ENCODE measurements at regions of chr9 and their contacts with region 1.

Region 1: GRCh38 chr9:120842690-120843499 is at the start of gene PSMD5:
- DNase-seq: peak; percentile 99
- H3K4me3 Mint-ChIP-seq: peak within 1 kb of the TSS; percentile 86
- H3K27ac Mint-ChIP-seq: peak within 1 kb of the TSS; percentile 95
- H3K4me1 Mint-ChIP-seq: peaks cover 75% of the 10 kb centered on the region
- H3K27me3 Mint-ChIP-seq: no peaks in the 10 kb centered on the region
- total RNA-seq, gene PSMD5: 51.8 to 64.0 TPM

Region 2: GRCh38 chr9:120755827-120756434 is 87.0 kb before region 1 on chr9:
- CTCF ChIA-PET with region 1: interaction called, 10 read pairs
- POLR2A ChIA-PET with region 1: interaction called, 6 read pairs
- DNase-seq: peak; percentile 66
- H3K4me3 Mint-ChIP-seq: no peak overlapping the region
- H3K27ac Mint-ChIP-seq: no peak overlapping the region
- H3K4me1 Mint-ChIP-seq: peaks cover 10% of the 10 kb centered on the region
- H3K27me3 Mint-ChIP-seq: no peaks in the 10 kb centered on the region

Region 3: GRCh38 chr9:120820095-120820494 is 22.8 kb before region 1 on chr9:
- CTCF ChIA-PET with region 1: no interaction called
- POLR2A ChIA-PET with region 1: no interaction called
- DNase-seq: no peak
- H3K4me3 Mint-ChIP-seq: no peak overlapping the region
- H3K27ac Mint-ChIP-seq: no peak overlapping the region
- H3K4me1 Mint-ChIP-seq: peaks cover 2% of the 10 kb centered on the region
- H3K27me3 Mint-ChIP-seq: no peaks in the 10 kb centered on the region

Region 4: DNA sequence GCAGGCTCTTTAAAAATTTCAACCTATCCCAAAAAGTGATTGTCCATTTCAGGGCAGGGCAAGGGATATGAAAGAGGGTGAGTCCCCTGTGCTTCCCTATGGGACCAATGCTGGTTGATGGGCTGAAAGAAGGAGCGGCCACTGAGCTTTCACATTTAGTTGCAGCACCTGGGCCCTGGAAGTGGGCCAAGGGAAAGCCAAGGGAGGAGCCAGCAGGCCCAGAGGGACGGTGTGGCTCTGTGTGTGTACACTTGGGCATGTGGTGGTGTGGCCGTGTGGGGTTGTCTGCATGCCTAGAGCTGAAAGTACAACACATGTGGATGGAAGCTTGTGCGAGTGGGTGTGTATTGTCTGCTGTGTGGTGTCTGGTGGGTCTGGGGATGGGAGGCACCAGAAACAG is 13.8 kb after region 1 on chr9:
- CTCF ChIA-PET with region 1: interaction called, 3 read pairs
- POLR2A ChIA-PET with region 1: interaction called, 59 read pairs
- DNase-seq: no peak
- H3K4me3 Mint-ChIP-seq: no peak overlapping the region
- H3K27ac Mint-ChIP-seq: no peak overlapping the region
- H3K4me1 Mint-ChIP-seq: peaks cover 6% of the 10 kb centered on the region
- H3K27me3 Mint-ChIP-seq: no peaks in the 10 kb centered on the region

Region 5: GRCh38 chr9:120875954-120876841 is 33.3 kb after region 1 on chr9:
- CTCF ChIA-PET with region 1: interaction called, 12 read pairs
- POLR2A ChIA-PET with region 1: interaction called, 98 read pairs
- DNase-seq: peak; percentile 94
- H3K4me3 Mint-ChIP-seq: peak overlapping the region; percentile 94
- H3K27ac Mint-ChIP-seq: peak overlapping the region; percentile 98
- H3K4me1 Mint-ChIP-seq: peaks cover 76% of the 10 kb centered on the region
- H3K27me3 Mint-ChIP-seq: no peaks in the 10 kb centered on the region

Region 6: DNA sequence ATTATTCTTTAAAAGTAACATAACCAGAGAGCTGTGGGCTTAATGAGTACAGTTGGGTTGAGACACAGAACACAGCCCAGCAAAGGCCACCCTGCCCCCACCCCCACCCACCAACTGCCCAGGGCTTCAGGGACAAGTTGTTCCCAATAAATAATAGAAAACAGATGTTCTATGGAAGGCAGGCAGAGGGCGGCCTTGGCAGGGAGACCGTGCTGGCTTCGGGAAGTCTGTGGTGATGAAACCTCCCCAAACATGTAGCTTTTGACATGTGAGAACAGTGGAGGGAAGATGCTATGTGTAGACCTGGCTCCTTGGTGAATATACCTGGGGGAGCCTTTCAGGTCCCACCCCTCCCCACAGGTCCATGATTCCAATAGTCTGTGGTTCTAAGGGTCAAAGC is 73.7 kb after region 1 on chr9:
- CTCF ChIA-PET with region 1: no interaction called
- POLR2A ChIA-PET with region 1: interaction called, 134 read pairs
- DNase-seq: no peak
- H3K4me3 Mint-ChIP-seq: peak overlapping the region; percentile 35
- H3K27ac Mint-ChIP-seq: peak overlapping the region; percentile 82
- H3K4me1 Mint-ChIP-seq: peaks cover 85% of the 10 kb centered on the region
- H3K27me3 Mint-ChIP-seq: no peaks in the 10 kb centered on the region

Region 7: DNA sequence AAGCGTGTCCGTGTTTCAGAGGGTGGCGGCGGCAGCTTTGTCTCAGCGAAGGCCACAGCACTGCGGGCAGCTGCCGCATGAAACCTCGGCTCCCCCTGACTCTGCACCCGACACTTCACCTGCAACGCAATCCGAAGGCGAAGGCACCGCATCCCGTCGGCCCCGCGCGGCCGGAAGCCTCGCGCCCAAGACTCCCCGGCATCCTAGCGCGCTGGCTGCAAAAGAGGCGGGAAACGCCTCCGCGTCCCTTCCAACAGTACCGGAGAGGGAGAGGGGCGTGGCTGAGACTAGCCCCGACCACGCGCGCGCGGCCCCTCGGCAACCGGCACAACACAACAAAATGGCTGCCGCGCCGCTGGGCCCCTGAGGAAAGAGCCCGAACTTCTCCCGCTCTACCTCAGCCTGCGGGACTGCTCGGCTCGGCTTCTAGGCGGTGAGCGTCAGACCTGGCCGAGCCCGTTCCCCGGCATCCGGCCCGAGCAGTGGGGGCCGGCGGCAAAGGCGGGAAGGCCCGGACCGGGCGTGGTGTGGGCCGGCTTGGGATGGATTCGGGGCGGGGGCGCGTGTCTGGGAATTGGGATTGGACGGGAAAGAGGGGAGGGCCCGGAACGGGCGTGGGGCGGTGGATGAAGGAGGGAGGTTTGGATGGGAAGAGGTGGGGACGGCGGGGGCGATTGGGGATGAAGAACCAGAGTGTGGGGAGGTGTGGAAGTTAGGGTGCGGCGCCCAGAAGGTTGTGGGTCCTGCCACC is 231.9 kb after region 1 on chr9 and contains the start of gene CNTRL:
- CTCF ChIA-PET with region 1: no interaction called
- POLR2A ChIA-PET with region 1: interaction called, 11 read pairs
- DNase-seq: peak; percentile 93
- H3K4me3 Mint-ChIP-seq: peak within 1 kb of the TSS; percentile 96
- H3K27ac Mint-ChIP-seq: peak within 1 kb of the TSS; percentile 91
- H3K4me1 Mint-ChIP-seq: peaks cover 53% of the 10 kb centered on the region
- H3K27me3 Mint-ChIP-seq: no peaks in the 10 kb centered on the region
- total RNA-seq, gene CNTRL: 84.1 to 86.9 TPM

Measured in activated CD4-positive, alpha-beta memory T cell treated with anti-CD3 and anti-CD28 coated beads, Interleukin-2, amount 10 ng/mL, durations not matched to agents 7 days and 5 days (primary cell).